GM10248 (cell line): ENCODE measurements at regions of chr20 and their contacts with region 1.

Region 1: DNA sequence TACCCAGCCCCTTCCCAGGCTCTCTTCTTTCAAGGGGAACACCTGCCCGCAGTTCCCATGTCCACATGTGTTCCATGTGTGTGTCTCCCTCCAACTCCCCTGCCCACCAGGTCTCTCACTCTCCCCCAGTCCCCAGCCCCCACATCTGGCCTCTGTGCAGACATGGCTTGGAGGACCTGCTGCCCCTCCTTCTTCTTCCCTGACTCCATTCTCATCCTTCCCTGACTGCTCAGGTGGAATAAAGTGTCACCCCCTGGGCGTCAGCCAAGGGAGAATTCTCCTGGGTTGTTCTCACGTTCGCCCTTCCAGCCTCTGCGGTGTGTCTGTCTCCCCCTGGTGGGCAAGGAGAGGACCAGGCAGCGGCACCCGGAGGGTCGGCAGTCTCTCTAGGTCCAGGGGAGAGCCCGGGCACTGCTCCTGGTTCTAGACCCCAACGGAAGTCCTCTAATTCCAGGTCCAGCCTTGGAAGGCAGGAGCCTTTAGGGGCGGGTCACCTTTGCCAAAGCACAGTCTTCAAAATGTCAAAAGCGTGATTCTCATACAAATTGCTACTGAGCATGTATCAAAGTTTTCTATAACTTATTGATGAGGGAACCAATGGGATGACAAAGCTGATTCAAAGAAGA is 50.5 kb downstream of the EBF4 start:
- DNase-seq: peak; percentile 80
- CTCF ChIP-seq: peak; percentile 86

Region 2: DNA sequence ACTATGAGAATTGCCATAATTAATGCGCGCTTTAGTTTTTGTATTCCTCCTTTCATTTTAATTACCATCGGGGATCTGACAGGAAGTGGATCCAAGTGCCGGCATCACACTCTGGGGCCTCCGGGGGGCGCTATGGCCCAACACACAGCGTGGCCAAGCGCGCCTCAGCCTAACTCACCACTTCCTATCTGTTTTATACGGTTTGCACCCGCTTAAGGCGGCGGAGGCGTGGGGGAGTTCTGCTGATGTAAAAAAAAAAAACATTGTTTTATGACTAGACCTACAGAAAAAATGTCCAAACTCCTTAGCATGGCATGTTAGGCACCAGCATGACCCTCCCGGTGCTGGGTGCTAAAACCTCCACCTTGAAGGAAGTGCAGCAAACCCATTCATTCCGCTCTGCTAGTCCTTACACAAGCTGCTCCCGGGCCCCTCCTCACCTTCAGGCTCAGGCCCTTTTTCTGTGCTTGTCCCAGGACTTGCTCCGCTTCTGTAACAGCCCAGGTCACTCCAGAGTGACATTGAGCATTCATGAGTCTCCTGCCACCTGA is 54.9 kb before region 1 on chr20:
- CTCF ChIA-PET with region 1: interaction called, 11 read pairs
- POLR2A ChIA-PET with region 1: no interaction called
- DNase-seq: peak; percentile 68
- CTCF ChIP-seq: peak; percentile 61

Region 3: GRCh38 chr20:2713285-2713684 is 29.8 kb before region 1 on chr20:
- CTCF ChIA-PET with region 1: interaction called, 10 read pairs
- POLR2A ChIA-PET with region 1: no interaction called
- DNase-seq: no peak
- CTCF ChIP-seq: peak; percentile 40

Region 4: GRCh38 chr20:2729251-2729713 is 13.8 kb before region 1 on chr20:
- CTCF ChIA-PET with region 1: interaction called, 43 read pairs
- POLR2A ChIA-PET with region 1: no interaction called
- DNase-seq: no peak
- CTCF ChIP-seq: no peak

Region 5: GRCh38 chr20:2771631-2772080 is 28.6 kb after region 1 on chr20:
- CTCF ChIA-PET with region 1: no interaction called
- POLR2A ChIA-PET with region 1: no interaction called
- DNase-seq: no peak
- CTCF ChIP-seq: no peak